GM13977 (cell line): ENCODE measurements at regions of chr21 and their contacts with region 1.

Region 1: GRCh38 chr21:16588433-16588860 is 858.7 kb downstream of the USP25 start:
- DNase-seq: no peak
- CTCF ChIP-seq: no peak

Region 2: DNA sequence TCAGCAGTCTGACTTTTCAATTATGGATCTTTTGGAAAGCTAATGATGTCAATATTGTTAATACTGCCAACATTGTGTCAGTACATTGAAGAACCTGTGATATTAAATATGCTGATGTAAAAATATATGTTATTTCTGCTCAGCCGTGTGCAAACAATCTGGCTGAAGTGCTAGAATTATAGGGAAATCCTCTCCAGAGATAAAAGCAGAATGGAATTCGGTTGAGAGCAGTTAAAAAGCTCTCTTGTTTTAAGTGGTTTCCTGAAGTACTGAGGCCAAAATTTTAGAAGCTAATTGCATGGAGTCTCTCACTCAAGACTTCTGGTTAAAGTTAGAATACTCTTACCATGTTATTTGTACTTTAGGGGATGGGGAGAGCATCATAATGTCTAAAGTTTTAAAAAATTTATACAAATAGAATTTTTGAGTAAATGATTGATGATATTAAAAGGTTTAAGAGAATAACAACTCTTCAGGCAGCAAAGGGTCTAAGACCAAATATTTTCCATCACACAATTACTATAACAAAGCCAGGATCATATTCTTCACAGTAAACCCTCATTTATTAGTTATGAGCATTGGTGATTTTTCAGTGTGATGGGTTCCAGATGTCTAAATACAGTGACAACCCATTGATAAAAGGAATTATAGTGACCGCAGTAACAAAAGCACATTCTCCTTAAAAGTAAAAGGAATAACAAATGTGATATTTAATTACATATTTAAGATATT is 90.1 kb after region 1 on chr21:
- in situ Hi-C with region 1: loop called (anchors 25 kb)
- DNase-seq: no peak
- CTCF ChIP-seq: no peak